Dorsolateral prefrontal cortex (tissue), 120 donors: ENCODE measurements at regions of chr1 and their contacts with region 1.

Region 1: DNA sequence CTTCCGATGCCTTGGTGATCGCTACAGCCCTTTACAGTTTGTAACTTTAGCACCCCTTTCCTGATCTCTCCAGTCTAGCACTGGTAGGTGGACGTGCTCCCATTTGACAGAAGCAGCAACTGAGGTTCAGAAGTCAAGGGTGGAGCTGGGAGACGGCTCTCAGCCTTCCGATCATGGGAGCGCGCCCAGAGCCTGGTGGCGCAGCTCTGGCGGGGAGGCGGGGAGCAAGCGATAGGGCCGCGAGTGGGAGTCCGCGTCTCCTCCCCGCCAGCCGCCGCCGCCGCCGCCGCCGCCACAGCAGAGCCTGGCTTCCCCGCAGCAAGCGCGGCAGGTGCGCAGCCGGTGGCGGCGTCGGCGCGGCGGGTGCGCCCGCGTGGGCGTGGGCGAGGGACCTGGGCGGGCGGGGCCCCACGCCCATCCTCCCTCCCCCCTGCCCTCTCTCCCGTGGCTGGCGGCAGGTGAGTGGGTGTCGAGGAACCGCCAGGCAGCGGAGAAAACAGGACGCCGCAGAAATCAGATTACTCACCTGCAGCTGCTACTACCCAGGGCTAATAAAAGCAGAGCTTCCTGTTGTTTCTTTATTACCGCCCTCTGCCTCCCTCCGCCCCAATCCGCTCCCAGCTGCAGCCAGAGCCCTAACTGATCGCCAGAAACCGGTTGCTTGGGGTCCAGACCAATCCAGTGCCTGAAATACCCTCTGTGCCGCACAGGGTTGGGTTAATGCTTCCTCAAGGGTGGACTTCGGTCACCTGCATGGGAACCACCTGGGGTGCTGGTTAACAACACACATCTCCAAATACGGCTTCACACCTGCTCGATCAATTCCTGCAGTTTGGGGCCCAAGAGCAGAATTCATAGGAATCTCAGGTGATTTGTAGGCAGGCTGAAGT is 60.2 kb upstream of the ID3 start:
- DNase-seq: peak in 1 of 10 donors; percentile 30
- H3K4me3 ChIP-seq: peak overlapping the region in 54 of 59 donors; percentile 10 to 61 (median 40)
- H3K27ac ChIP-seq: no peak overlapping the region
- H3K27me3 ChIP-seq: peaks cover 0 to 15% (median 0%) of the 10 kb centered on the region in 45 donors
- CTCF ChIP-seq: no peak

Region 2: DNA sequence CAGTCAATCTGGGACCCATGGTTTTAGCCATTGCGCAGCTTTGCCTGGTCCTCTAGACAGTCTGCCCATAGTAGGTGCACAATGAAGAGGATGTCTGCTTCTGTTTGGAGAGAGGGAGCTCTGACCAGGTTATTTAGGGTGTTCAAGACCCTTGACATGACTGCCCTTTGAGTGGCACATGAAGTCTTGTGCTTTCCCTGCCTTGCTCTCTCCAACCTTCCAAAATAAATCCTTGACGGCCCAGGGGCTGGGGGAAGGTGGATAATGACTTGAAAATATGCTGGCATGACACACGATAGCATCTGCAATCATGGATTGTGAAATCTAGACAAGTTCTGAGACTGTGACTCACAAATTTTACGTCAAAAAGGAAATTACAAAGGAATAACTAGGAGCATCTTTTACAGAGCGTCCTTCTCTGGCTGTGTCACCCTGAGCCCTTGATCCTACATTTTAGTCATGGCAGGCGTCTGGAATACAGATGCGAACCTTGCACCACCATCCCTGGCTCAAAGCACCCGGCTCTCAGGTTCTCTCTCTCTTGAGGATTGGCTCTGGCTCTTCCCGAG is 34.0 kb before region 1 on chr1:
- intact Hi-C with region 1: loop called in 1 of 2 experiments (anchors 5 kb)
- DNase-seq: no peak
- H3K4me3 ChIP-seq: no peak overlapping the region
- H3K27ac ChIP-seq: no peak overlapping the region
- H3K27me3 ChIP-seq: no peaks in the 10 kb centered on the region
- CTCF ChIP-seq: no peak